Colonic mucosa (tissue), 4 donors: ENCODE measurements at regions of chr3 and their contacts with region 1.

Region 1: DNA sequence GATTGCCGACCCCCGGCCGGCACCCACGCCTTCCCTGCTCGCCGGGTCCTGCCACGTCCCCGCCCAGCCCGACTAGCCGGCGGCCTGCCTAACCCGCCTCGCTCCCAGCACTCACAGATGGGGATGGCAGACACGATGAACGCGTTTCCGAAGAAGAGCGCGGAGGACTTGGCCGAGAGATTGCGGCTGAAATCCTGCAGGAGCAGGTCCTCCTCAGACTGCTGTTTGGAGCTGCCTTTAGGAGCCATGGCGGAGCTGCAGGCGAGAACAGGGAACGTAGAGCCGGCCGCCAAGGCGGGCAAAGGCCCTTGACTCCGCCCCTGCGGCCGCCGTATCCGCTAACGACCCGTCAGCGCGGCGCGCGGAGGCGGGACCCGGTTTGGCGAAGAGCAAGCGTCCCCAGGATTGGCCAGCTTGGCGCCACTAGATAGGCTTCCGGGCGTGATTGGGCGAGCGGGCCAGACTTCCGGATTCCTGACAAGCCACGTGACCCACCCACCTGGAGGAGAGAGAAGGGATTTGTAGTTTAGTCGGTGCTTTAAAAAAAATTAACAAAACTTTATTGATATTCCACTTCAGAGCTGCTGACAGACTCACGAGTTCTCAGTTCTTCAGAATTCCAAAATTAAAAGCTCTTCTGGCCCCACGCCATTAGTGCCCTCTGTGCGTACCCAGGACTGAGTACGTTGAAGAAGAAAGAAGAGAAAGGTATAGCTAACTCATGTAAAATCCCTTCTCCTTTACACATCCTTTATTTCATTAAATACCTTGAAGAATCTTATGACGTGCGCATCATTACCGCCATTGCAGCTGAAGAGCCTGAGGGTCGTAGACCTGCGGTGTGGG is at the start of gene SSR3:
- DNase-seq: peak; percentile 99
- H3K4me3 ChIP-seq: peak within 1 kb of the TSS; percentile 87
- H3K27ac ChIP-seq: peak within 1 kb of the TSS; percentile 73
- H3K4me1 ChIP-seq: no peaks in the 10 kb centered on the region
- H3K27me3 ChIP-seq: no peaks in the 10 kb centered on the region
- CTCF ChIP-seq: no peak
- total RNA-seq, gene SSR3: 134 to 171 TPM

Region 2: DNA sequence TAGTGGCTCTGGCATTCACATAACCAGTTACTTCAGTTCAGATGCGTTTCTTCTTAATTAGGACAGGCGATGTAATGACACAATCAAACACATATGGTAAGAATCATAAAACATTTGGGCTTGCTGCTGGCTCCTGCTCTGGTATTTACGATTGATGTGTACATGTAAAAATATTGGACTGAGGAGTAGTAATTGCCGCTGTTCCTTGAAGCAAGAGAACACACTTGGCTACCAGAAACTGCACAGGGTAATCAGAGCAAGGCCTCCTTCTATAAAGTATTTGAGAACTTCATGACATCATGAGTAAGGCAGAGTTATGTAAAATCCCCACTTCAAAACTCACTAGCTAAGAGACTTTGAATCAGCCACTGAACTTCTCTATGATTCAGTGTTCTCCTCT is 158.2 kb before region 1 on chr3:
- intact Hi-C with region 1: no loop called
- DNase-seq: no peak
- H3K4me3 ChIP-seq: no peak overlapping the region
- H3K27ac ChIP-seq: no peak overlapping the region
- H3K4me1 ChIP-seq: no peaks in the 10 kb centered on the region
- H3K27me3 ChIP-seq: no peaks in the 10 kb centered on the region
- CTCF ChIP-seq: no peak

Region 3: GRCh38 chr3:156643729-156644389 is 88.8 kb after region 1 on chr3:
- intact Hi-C with region 1: no loop called
- DNase-seq: peak; percentile 27
- H3K4me3 ChIP-seq: no peak overlapping the region
- H3K27ac ChIP-seq: no peak overlapping the region
- H3K4me1 ChIP-seq: no peaks in the 10 kb centered on the region
- H3K27me3 ChIP-seq: no peaks in the 10 kb centered on the region
- CTCF ChIP-seq: no peak

Region 4: GRCh38 chr3:156826144-156826895 is 271.3 kb after region 1 on chr3 and contains the start of gene LEKR1:
- intact Hi-C with region 1: loop called (anchors 10 kb)
- DNase-seq: peak; percentile 87
- H3K4me3 ChIP-seq: peak within 1 kb of the TSS; percentile 69
- H3K27ac ChIP-seq: peak within 1 kb of the TSS; percentile 97
- H3K4me1 ChIP-seq: no peaks in the 10 kb centered on the region
- H3K27me3 ChIP-seq: no peaks in the 10 kb centered on the region
- CTCF ChIP-seq: no peak
- total RNA-seq, gene LEKR1: 1.6 to 2.0 TPM

Region 5: GRCh38 chr3:157159762-157160657 is 604.9 kb after region 1 on chr3 and contains the start of gene CCNL1:
- intact Hi-C with region 1: loop called (anchors 10 kb)
- DNase-seq: peak; percentile 96
- H3K4me3 ChIP-seq: peak within 1 kb of the TSS; percentile 88
- H3K27ac ChIP-seq: peak within 1 kb of the TSS; percentile 100
- H3K4me1 ChIP-seq: peaks cover 23% of the 10 kb centered on the region
- H3K27me3 ChIP-seq: no peaks in the 10 kb centered on the region
- CTCF ChIP-seq: no peak
- total RNA-seq, gene CCNL1: 76.4 to 103 TPM